ENCODE measurements at regions of chr11 and their contacts with region 1.

Region 1: DNA sequence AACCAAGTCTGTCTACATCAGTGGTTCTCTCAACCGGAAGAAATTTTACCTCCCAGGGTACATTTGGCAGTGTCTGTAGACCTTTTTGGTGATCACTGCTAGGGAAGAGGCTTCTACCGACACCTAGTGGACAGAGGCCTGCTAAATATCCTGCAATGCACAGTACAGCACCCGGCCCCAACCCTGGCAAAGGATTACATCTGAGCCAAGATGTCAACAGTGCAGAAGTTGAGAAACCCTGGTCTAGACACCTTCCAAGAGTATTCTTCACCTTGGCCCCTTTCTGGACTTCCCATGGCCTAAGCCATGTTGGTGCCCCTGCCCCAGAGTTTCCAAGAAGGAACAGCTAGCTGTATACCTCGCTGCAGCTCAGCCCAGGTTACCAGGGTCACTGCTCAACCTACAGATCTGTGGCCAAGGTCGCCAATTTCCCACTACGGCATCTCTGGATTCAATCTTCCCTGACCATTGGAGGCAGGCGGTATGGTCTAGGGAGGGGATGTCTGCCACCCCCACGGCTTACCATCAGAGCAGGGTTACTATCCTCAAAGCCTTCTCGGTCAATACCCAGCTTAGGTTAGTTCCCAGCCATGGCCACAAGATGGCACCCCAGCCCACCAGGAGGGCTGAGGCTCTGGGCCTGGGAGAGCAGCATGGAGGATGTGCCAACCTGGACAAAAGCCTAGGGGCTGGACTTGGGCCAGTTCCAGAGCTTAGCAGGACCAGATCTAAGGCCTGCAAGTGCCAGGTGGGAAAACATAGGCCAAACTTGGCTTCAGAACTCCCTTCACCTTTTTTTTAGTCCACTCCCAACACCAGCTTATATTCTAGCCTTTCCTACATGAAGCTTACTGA is 3.7 kb upstream of the KCNC1 start:
- DNase-seq: peak; percentile 80
- H3K4me3 Mint-ChIP-seq: no peak overlapping the region
- H3K27ac Mint-ChIP-seq: no peak overlapping the region
- H3K4me1 Mint-ChIP-seq: peaks cover 5% of the 10 kb centered on the region
- H3K27me3 Mint-ChIP-seq: peaks cover 43% of the 10 kb centered on the region

Region 2: GRCh38 chr11:17384002-17384511 is 346.8 kb before region 1 on chr11:
- CTCF ChIA-PET with region 1: no interaction called
- intact Hi-C with region 1: loop called (anchors 10 kb)
- DNase-seq: peak; percentile 88
- H3K4me3 Mint-ChIP-seq: no peak overlapping the region
- H3K27ac Mint-ChIP-seq: no peak overlapping the region
- H3K4me1 Mint-ChIP-seq: peaks cover 2% of the 10 kb centered on the region
- H3K27me3 Mint-ChIP-seq: no peaks in the 10 kb centered on the region

Region 3: GRCh38 chr11:17743808-17744119 is 12.9 kb after region 1 on chr11:
- CTCF ChIA-PET with region 1: interaction called, 15 read pairs
- intact Hi-C with region 1: no loop called
- DNase-seq: no peak
- H3K4me3 Mint-ChIP-seq: no peak overlapping the region
- H3K27ac Mint-ChIP-seq: no peak overlapping the region
- H3K4me1 Mint-ChIP-seq: no peaks in the 10 kb centered on the region
- H3K27me3 Mint-ChIP-seq: peaks cover 5% of the 10 kb centered on the region

Region 4: DNA sequence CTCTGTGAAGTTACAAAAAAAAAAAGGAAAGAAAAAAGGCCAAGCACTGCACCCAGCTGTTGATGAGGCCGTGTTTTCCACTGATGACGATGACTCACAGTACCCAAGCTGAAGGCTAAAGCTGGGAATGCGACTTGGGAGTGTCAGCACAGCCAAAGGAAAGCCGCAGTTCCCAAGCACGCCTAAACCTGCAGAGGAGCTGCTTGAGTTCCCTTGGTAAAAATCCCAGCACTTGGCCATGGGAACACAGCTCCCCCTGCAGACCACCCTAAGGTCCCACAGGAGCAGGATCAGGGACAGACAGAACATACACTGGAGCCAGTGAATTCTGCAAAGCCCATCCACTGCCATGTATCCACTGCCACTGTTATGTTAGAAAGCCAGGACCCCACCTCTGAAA is 242.2 kb after region 1 on chr11:
- CTCF ChIA-PET with region 1: interaction called, 100 read pairs
- intact Hi-C with region 1: no loop called
- DNase-seq: peak; percentile 18
- H3K4me3 Mint-ChIP-seq: no peak overlapping the region
- H3K27ac Mint-ChIP-seq: no peak overlapping the region
- H3K4me1 Mint-ChIP-seq: no peaks in the 10 kb centered on the region
- H3K27me3 Mint-ChIP-seq: no peaks in the 10 kb centered on the region

Region 5: GRCh38 chr11:18091731-18092130 is 360.9 kb after region 1 on chr11:
- CTCF ChIA-PET with region 1: no interaction called
- intact Hi-C with region 1: loop called (anchors 10 kb)
- DNase-seq: no peak
- H3K4me3 Mint-ChIP-seq: no peak overlapping the region
- H3K27ac Mint-ChIP-seq: no peak overlapping the region
- H3K4me1 Mint-ChIP-seq: peaks cover 24% of the 10 kb centered on the region
- H3K27me3 Mint-ChIP-seq: no peaks in the 10 kb centered on the region

Measured in activated naive CD4-positive, alpha-beta T cell treated with anti-CD3 and anti-CD28 coated beads for 36 hours (primary cell).